Activated CD8-positive, alpha-beta T cell treated with anti-CD3 and anti-CD28 coated beads for 36 hours (primary cell): ENCODE measurements at regions of chr12 and their contacts with region 1.

Region 1: DNA sequence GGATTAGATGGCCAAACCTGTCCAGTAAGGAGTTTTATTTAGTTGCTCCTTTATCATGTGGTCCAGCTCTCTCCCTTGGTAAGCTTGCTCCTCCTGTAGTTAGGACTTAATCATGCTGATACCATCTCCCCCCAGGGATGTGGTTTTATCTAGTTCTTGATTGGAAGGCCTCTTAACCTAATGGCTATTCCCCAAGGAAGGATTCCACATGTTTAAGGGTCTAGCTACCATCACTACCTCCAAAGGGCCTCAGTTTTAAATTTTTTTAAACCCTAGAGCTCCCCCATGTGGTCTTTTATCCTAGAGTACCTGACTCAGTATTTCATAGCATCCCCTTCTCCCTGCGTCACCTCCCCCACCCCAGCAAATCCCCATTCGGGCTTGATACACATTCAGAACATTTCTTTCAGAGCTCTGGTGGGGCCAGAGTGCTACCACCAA is 22.5 kb downstream of the MAP3K12 start:
- DNase-seq: no peak
- ATAC-seq: no peak
- H3K4me3 Mint-ChIP-seq: no peak overlapping the region
- H3K27ac Mint-ChIP-seq: peak overlapping the region; percentile 34
- H3K4me1 Mint-ChIP-seq: peaks cover 52% of the 10 kb centered on the region
- H3K27me3 Mint-ChIP-seq: no peaks in the 10 kb centered on the region
- CTCF ChIP-seq: peak; percentile 43

Region 2: GRCh38 chr12:53258541-53259539 is 217.9 kb before region 1 on chr12:
- CTCF ChIA-PET with region 1: no interaction called
- POLR2A ChIA-PET with region 1: no interaction called
- intact Hi-C with region 1: no loop called
- DNase-seq: no peak
- ATAC-seq: no peak
- H3K4me3 Mint-ChIP-seq: no peak overlapping the region
- H3K27ac Mint-ChIP-seq: no peak overlapping the region
- H3K4me1 Mint-ChIP-seq: peaks cover 26% of the 10 kb centered on the region
- H3K27me3 Mint-ChIP-seq: no peaks in the 10 kb centered on the region
- CTCF ChIP-seq: no peak

Region 3: GRCh38 chr12:53459097-53459496 is 17.7 kb before region 1 on chr12:
- CTCF ChIA-PET with region 1: interaction called, 16 read pairs
- POLR2A ChIA-PET with region 1: interaction called, 1,494 read pairs
- intact Hi-C with region 1: no loop called
- DNase-seq: no peak
- ATAC-seq: no peak
- H3K4me3 Mint-ChIP-seq: no peak overlapping the region
- H3K27ac Mint-ChIP-seq: peak overlapping the region; percentile 46
- H3K4me1 Mint-ChIP-seq: peaks cover 66% of the 10 kb centered on the region
- H3K27me3 Mint-ChIP-seq: no peaks in the 10 kb centered on the region
- CTCF ChIP-seq: no peak

Region 4: GRCh38 chr12:53465679-53466078 is 11.1 kb before region 1 on chr12:
- CTCF ChIA-PET with region 1: interaction called, 16 read pairs
- POLR2A ChIA-PET with region 1: interaction called, 1,494 read pairs
- intact Hi-C with region 1: no loop called
- DNase-seq: no peak
- ATAC-seq: no peak
- H3K4me3 Mint-ChIP-seq: no peak overlapping the region
- H3K27ac Mint-ChIP-seq: no peak overlapping the region
- H3K4me1 Mint-ChIP-seq: peaks cover 39% of the 10 kb centered on the region
- H3K27me3 Mint-ChIP-seq: no peaks in the 10 kb centered on the region
- CTCF ChIP-seq: no peak